Right cardiac atrium (tissue), 5 donors: ENCODE measurements at regions of chr3 and their contacts with region 1.

Region 1: DNA sequence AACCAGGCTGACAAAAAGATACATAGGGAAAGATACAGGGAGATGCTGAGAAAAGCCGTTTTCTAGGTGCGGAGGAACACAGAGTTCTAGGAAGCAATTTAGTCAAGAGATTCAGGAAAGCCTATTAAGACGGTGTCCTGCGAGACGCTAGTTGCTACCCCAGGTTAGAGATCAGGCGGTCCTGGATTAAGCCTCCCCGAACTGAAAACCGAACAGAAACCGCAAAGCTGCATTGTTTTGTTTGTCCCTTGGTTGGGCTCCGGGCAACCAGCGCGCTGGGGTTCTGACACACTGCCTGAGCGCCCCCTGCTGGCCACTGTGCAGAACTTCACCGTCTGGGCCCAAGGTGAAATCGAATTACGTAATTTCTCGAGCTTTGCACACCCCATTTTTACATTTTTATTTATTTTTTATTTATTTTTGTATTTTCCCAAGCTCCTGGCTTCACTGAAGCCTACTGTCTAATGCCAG is 37.3 kb upstream of the NDUFB4 start:
- DNase-seq: peak; percentile 88 to 95 (median 94)
- ATAC-seq: peak; percentile 52 to 63
- H3K4me3 ChIP-seq: peak overlapping the region; percentile 60
- H3K27ac ChIP-seq: peak overlapping the region; percentile 95
- H3K4me1 ChIP-seq: peaks cover 5% of the 10 kb centered on the region
- H3K27me3 ChIP-seq: no peaks in the 10 kb centered on the region

Region 2: GRCh38 chr3:120245386-120245785 is 313.4 kb before region 1 on chr3:
- intact Hi-C with region 1: loop called (anchors 2 to 10 kb)
- DNase-seq: no peak
- ATAC-seq: no peak
- H3K4me3 ChIP-seq: no peak overlapping the region
- H3K27ac ChIP-seq: no peak overlapping the region
- H3K4me1 ChIP-seq: no peaks in the 10 kb centered on the region
- H3K27me3 ChIP-seq: no peaks in the 10 kb centered on the region

Region 3: GRCh38 chr3:120417272-120417911 is 141.4 kb before region 1 on chr3:
- intact Hi-C with region 1: loop called (anchors 2 to 10 kb)
- DNase-seq: peak; percentile 88 to 94 (median 94)
- ATAC-seq: peak; percentile 66 to 81
- H3K4me3 ChIP-seq: no peak overlapping the region
- H3K27ac ChIP-seq: peak overlapping the region; percentile 49
- H3K4me1 ChIP-seq: peaks cover 17% of the 10 kb centered on the region
- H3K27me3 ChIP-seq: no peaks in the 10 kb centered on the region

Region 4: GRCh38 chr3:120506828-120507774 is 51.7 kb before region 1 on chr3:
- intact Hi-C with region 1: loop called in 2 of 4 experiments (anchors 5 to 10 kb)
- DNase-seq: no peak
- ATAC-seq: peak; percentile 71 to 73
- H3K4me3 ChIP-seq: no peak overlapping the region
- H3K27ac ChIP-seq: no peak overlapping the region
- H3K4me1 ChIP-seq: peaks cover 10% of the 10 kb centered on the region
- H3K27me3 ChIP-seq: no peaks in the 10 kb centered on the region